ENCODE measurements at regions of chr10 and their contacts with region 1.

Region 1: DNA sequence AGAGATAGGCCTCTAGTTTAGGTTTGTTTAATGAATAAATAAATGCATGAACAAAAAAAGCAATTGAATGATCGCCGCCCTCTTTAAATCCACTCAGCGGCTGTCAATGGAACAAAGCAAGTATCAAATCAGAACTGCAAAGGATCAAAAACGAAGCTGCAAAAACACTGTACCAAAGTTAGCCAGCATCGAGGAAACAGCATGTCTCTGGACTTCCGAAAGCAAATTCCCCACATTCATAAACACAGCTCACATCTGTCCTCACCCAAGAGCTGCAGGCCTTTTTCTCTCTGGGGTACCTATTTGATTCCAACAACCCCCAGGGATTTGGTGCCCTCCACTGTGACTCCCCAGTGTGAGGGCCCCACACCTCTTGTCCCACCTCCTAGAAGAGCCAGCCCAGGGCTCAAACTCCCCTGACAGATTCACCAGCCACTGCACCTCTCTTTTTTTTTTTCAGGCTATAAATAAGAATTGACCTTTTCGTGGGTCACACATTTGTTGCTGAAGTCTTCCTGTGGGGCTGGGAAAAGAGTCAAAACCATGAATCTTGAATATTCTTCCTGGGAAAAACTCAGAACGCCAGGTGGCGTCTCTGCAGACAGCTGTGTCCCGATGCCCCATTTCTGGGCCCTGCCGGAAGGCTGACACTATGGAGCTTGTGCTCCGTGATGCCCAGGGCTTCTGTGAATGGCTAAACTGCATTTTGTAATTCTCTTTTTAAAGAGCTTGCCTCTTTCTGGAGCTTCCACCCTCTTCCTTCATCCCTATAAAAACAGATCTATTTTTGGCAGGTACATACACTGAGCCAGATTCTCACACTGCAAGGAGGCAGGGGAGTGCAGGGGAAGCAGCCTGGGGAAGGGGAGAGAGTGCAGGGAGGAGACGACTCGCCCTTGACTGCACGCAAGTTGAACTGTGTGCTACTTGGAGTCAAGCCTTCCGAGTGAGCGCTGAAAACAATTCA is 51.7 kb downstream of the HSPA12A start:
- DNase-seq: no peak
- H3K4me3 ChIP-seq: no peak overlapping the region
- H3K27ac ChIP-seq: no peak overlapping the region
- H3K27me3 ChIP-seq: no peaks in the 10 kb centered on the region
- CTCF ChIP-seq: no peak

Region 2: DNA sequence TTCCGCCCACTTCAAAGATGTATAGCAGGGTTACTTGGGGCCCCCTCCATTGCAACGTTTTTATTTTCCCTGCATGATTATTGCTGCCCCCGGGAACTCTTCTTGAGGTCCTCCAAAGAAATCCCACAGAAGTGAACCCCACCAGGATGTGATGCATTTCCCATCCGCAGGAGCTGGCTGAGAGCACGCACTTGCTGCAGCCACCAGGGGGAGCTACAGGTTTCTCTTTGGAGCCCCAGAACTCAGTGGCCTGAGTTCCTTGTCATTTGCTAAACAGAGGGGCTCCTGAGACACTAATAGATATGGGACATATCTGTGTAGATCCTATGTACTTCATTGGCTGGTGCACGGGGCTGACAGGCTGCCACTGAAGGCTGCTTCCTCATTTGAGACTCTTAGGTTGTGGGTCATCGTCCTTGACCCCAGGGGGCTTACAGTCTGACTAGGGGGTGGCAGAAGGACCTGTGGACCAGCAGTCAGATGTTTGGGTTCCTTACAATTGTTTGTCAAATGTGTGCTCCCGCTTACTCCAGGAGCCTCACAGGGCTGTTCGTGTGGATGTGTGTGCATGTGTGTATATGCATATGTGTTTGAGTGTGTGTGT is 106.4 kb after region 1 on chr10:
- in situ Hi-C with region 1: loop called (anchors 25 kb)
- DNase-seq: peak; percentile 52
- H3K4me3 ChIP-seq: no peak overlapping the region
- H3K27ac ChIP-seq: no peak overlapping the region
- H3K27me3 ChIP-seq: no peaks in the 10 kb centered on the region
- CTCF ChIP-seq: peak; percentile 98

Region 3: GRCh38 chr10:117174439-117175214 is 484.0 kb after region 1 on chr10:
- in situ Hi-C with region 1: loop called (anchors 25 kb)
- DNase-seq: peak; percentile 68
- H3K4me3 ChIP-seq: peak overlapping the region; percentile 36
- H3K27ac ChIP-seq: no peak overlapping the region
- H3K27me3 ChIP-seq: peaks cover 18% of the 10 kb centered on the region
- CTCF ChIP-seq: peak; percentile 91

Region 4: GRCh38 chr10:117241541-117242462 is 551.2 kb after region 1 on chr10:
- in situ Hi-C with region 1: no loop called
- DNase-seq: no peak
- H3K4me3 ChIP-seq: no peak overlapping the region
- H3K27ac ChIP-seq: no peak overlapping the region
- H3K27me3 ChIP-seq: peaks cover 28% of the 10 kb centered on the region
- CTCF ChIP-seq: no peak